ENCODE measurements at regions of chr3 and their contacts with region 1.

Region 1: GRCh38 chr3:34016925-34017587 is 218.6 kb downstream of the PDCD6IP start:
- DNase-seq: no peak
- CTCF ChIP-seq: no peak

Region 2: DNA sequence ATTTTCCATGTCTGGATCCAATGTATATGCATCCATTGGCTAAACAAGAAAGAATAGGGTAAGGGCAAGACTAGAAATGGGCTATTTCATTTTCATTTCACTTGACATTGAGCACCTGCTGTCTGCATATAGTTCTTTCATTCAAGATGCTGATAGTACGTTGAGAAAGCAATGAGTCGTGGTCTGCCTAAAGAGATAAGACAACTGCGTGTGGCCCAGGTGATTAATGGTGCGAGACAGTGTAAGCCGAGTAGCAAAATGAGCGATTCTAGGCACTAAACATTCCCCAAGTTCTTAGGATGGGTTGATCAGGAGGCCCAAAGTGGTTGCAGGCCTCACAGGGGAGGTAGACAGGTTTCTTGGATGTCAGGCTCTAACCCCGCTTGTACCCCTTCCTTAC is 16.8 kb after region 1 on chr3:
- CTCF ChIA-PET with region 1: interaction called, 14 read pairs
- POLR2A ChIA-PET with region 1: no interaction called
- DNase-seq: no peak
- CTCF ChIP-seq: no peak

Region 3: GRCh38 chr3:34073961-34074360 is 56.9 kb after region 1 on chr3:
- CTCF ChIA-PET with region 1: no interaction called
- POLR2A ChIA-PET with region 1: no interaction called
- DNase-seq: no peak
- CTCF ChIP-seq: no peak

Region 4: GRCh38 chr3:34159613-34160420 is 142.8 kb after region 1 on chr3:
- CTCF ChIA-PET with region 1: no interaction called
- POLR2A ChIA-PET with region 1: no interaction called
- DNase-seq: no peak
- CTCF ChIP-seq: no peak

Region 5: DNA sequence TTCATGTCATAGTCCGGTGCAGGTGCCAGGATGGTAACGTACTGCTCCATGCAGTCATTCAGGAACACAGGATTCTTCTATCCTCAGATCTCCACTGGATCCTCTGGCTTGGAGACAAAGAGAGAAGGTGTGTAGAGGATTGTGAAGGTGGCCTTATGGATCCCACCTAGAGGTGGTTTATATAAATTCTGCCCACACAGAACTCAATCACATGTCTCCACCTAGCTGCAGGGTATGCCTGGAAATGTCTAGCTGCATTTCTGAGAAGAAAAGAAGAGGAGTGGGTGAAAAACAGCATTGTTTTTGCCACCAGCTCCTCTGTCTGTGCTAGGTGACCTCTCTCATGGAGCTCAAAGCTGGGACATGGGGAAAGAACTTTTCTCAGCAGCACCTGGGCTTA is 260.1 kb after region 1 on chr3:
- CTCF ChIA-PET with region 1: no interaction called
- POLR2A ChIA-PET with region 1: no interaction called
- DNase-seq: no peak
- CTCF ChIP-seq: peak; percentile 20

Region 6: GRCh38 chr3:34504775-34505174 is 487.7 kb after region 1 on chr3:
- CTCF ChIA-PET with region 1: no interaction called
- POLR2A ChIA-PET with region 1: interaction called, 14 read pairs
- DNase-seq: no peak
- CTCF ChIP-seq: no peak

Measured in GM10248 (cell line).